ENCODE measurements at regions of chr6 and their contacts with region 1.

Region 1: DNA sequence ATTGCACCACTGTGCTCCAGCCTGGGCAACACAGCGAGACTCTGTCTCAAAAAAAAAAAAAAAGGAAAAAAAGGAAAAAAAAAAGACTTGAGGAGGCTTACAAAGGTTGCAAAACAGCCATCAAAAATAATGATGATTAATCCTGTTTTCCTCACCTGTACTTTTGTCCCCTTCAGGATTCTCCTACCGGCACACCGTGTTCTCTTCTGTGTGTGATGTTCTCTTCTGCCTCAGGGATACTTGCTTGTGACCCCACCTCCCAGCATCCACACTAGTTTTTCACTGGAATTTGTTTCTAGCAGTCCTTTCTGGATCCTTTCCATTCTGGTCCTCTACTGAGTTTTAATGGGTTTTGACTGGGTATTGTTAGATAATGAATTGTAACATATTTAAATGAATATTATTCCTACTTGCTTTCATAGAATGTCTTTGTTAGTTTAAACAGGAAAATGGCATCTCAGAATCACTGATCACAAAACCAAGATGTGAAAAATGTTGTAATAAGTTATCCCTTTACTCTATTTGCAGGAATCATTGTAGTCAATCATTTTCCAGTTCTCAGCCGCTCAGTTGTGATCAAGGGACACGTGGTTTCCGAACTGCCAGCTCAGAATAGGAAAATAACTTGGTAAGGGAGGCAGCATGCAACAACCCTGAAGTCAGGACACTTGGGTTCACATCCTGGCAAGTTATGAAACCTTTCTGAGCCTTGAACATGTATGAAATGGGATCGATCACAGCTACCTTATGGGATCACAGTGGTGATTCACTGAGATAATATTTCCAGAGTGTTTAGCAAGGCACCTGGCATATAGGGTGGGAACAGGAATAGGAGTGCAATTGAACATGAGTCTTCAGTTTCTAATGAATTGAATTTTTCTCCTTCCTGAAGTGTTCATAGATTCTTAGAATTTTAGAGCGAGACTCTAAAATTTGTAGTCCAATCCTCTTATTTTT is 8.5 kb downstream of the C6orf89 start:
- DNase-seq: no peak
- ATAC-seq: no peak
- H3K4me3 ChIP-seq: no peak overlapping the region
- H3K27ac ChIP-seq: no peak overlapping the region
- H3K4me1 ChIP-seq: peaks cover 3% of the 10 kb centered on the region
- H3K27me3 ChIP-seq: no peaks in the 10 kb centered on the region
- CTCF ChIP-seq: no peak
- POLR2A ChIP-seq: no peak

Region 2: GRCh38 chr6:36979347-36979742 is 85.1 kb after region 1 on chr6:
- intact Hi-C with region 1: loop called (anchors 5 kb)
- DNase-seq: peak; percentile 61 to 82 (median 76)
- ATAC-seq: peak; percentile 73
- H3K4me3 ChIP-seq: no peak overlapping the region
- H3K27ac ChIP-seq: peak overlapping the region in 2 of 4 donors; percentile 22 to 23
- H3K4me1 ChIP-seq: peaks cover 50% of the 10 kb centered on the region
- H3K27me3 ChIP-seq: no peaks in the 10 kb centered on the region
- CTCF ChIP-seq: peak; percentile 33 to 78 (median 72)
- POLR2A ChIP-seq: no peak